ENCODE measurements at regions of chr17 and their contacts with region 1.

Region 1: DNA sequence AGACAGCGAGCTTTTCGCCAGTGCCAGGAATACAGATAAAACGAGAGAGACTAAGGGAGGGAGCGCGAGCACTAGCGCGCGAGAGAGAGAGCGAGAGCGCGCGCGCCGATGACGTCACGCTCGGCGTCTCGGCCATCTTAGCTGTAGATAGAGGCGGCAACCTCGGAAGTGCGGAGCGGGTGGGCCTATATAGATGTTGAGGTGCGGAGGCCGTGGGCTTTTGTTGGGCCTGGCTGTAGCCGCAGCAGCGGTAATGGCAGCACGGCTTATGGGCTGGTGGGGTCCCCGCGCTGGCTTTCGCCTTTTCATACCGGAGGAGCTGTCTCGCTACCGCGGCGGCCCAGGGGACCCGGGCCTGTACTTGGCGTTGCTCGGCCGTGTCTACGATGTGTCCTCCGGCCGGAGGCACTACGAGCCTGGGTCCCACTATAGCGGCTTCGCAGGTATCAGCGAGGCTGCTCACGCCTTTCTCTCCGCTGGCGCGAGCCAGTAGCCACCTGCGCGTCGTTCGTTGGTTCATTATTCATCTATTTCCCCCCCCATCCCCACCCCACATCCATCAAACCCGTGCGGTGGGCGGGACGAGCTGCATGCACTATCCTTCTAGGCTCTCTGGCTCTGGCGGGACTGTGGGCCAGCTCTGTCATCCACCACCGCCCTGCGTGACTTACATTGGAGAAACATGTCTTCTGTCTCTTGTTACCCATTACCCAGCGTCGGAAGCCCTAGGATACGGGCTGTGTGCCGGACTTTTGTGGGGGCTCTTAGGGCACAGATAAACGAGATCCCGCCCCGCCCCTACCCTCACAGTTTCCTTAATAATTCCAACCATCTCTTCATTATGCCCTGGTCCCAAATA is 795 bp downstream of the CYB5D2 start:
- DNase-seq: peak; percentile 91
- H3K4me3 Mint-ChIP-seq: peak overlapping the region; percentile 98
- H3K27ac Mint-ChIP-seq: peak overlapping the region; percentile 100
- H3K4me1 Mint-ChIP-seq: peaks cover 49% of the 10 kb centered on the region
- H3K27me3 Mint-ChIP-seq: no peaks in the 10 kb centered on the region

Region 2: GRCh38 chr17:4082136-4082924 is 61.5 kb before region 1 on chr17:
- CTCF ChIA-PET with region 1: no interaction called
- POLR2A ChIA-PET with region 1: interaction called, 10 read pairs
- DNase-seq: no peak
- H3K4me3 Mint-ChIP-seq: no peak overlapping the region
- H3K27ac Mint-ChIP-seq: peak overlapping the region; percentile 65
- H3K4me1 Mint-ChIP-seq: peaks cover 24% of the 10 kb centered on the region
- H3K27me3 Mint-ChIP-seq: no peaks in the 10 kb centered on the region

Region 3: GRCh38 chr17:4130715-4131114 is 13.1 kb before region 1 on chr17:
- CTCF ChIA-PET with region 1: interaction called, 3 read pairs
- POLR2A ChIA-PET with region 1: interaction called, 16 read pairs
- DNase-seq: no peak
- H3K4me3 Mint-ChIP-seq: no peak overlapping the region
- H3K27ac Mint-ChIP-seq: no peak overlapping the region
- H3K4me1 Mint-ChIP-seq: peaks cover 29% of the 10 kb centered on the region
- H3K27me3 Mint-ChIP-seq: no peaks in the 10 kb centered on the region

Region 4: DNA sequence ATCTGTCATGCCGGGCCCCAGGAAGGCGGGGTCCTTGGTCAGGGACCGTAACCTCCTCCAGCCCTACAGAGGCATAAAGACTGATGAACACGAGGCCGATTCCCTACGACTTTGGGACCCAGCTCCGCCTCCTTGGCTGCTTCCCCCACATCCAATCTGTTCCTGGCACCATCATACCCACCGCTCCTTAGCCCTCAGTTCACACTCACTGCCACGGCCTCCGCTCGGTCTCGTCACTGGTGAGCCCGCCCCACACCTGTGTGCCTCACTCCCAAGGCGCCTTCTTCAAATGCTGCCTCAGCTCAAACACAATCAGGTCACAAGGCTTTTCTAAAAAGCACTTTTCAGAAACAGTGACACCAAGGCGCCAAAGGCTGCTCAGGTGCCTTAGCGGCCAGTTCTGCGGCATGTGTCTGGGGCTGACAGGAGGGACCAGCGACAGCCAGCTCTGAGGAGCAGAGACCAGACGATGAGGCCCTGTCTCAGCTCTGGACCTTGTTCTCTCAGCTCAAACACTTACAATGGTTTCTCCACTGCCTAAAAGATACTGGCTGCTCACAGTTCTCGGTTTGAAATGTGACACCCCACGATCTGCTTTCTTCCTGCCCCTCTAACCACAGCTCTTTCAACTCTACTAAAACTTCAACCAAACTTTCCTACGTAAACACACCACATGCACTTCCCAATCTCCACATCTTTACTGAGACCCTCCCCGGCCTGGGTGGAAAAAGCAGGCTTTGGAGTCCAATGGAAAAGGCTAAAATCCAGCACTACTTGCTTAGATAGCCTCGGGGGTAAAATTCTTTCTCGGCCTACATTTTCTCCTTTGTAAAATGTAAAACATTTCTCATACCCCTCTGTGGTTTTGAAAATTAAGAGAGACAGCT is 32.4 kb after region 1 on chr17:
- CTCF ChIA-PET with region 1: interaction called, 3 read pairs
- POLR2A ChIA-PET with region 1: interaction called, 71 read pairs
- DNase-seq: peak; percentile 58
- H3K4me3 Mint-ChIP-seq: peak overlapping the region; percentile 70
- H3K27ac Mint-ChIP-seq: peak overlapping the region; percentile 100
- H3K4me1 Mint-ChIP-seq: peaks cover 50% of the 10 kb centered on the region
- H3K27me3 Mint-ChIP-seq: no peaks in the 10 kb centered on the region

Region 5: GRCh38 chr17:4939796-4940624 is 796.2 kb after region 1 on chr17 and contains the starts of genes RNF167 and SLC25A11:
- CTCF ChIA-PET with region 1: no interaction called
- POLR2A ChIA-PET with region 1: interaction called, 13 read pairs
- DNase-seq: peak; percentile 98
- H3K4me3 Mint-ChIP-seq: peak within 1 kb of the TSS; percentile 96
- H3K27ac Mint-ChIP-seq: peak within 1 kb of the TSS; percentile 100
- H3K4me1 Mint-ChIP-seq: peaks cover 61% of the 10 kb centered on the region
- H3K27me3 Mint-ChIP-seq: no peaks in the 10 kb centered on the region
- total RNA-seq, gene RNF167: 249 to 261 TPM
- total RNA-seq, gene SLC25A11: 62.8 to 71.0 TPM

Measured in activated CD4-positive, alpha-beta memory T cell treated with anti-CD3 and anti-CD28 coated beads, Interleukin-2, amount 10 ng/mL, durations not matched to agents 7 days and 5 days (primary cell).